ENCODE measurements at regions of chr18 and their contacts with region 1.

Region 1: GRCh38 chr18:23077493-23078256 is 57.6 kb upstream of the CABLES1 start:
- DNase-seq: peak; percentile 77 to 81
- H3K4me3 ChIP-seq: no peak overlapping the region
- H3K4me3 Mint-ChIP-seq: peak overlapping the region; percentile 7
- H3K27ac Mint-ChIP-seq: peak overlapping the region; percentile 50
- H3K4me1 ChIP-seq: peaks cover 9% of the 10 kb centered on the region
- H3K4me1 Mint-ChIP-seq: peaks cover 19% of the 10 kb centered on the region
- H3K27me3 ChIP-seq: no peaks in the 10 kb centered on the region
- H3K27me3 Mint-ChIP-seq: no peaks in the 10 kb centered on the region
- CTCF ChIP-seq: peak; percentile 45 to 70

Region 2: GRCh38 chr18:22591222-22591621 is 486.5 kb before region 1 on chr18:
- CTCF ChIA-PET with region 1: no interaction called
- POLR2A ChIA-PET with region 1: no interaction called
- intact Hi-C with region 1: no loop called
- DNase-seq: no peak
- H3K4me3 ChIP-seq: no peak overlapping the region
- H3K4me3 Mint-ChIP-seq: no peak overlapping the region
- H3K27ac Mint-ChIP-seq: no peak overlapping the region
- H3K4me1 ChIP-seq: no peaks in the 10 kb centered on the region
- H3K4me1 Mint-ChIP-seq: no peaks in the 10 kb centered on the region
- H3K27me3 ChIP-seq: no peaks in the 10 kb centered on the region
- H3K27me3 Mint-ChIP-seq: peaks cover 11% of the 10 kb centered on the region
- CTCF ChIP-seq: no peak

Region 3: DNA sequence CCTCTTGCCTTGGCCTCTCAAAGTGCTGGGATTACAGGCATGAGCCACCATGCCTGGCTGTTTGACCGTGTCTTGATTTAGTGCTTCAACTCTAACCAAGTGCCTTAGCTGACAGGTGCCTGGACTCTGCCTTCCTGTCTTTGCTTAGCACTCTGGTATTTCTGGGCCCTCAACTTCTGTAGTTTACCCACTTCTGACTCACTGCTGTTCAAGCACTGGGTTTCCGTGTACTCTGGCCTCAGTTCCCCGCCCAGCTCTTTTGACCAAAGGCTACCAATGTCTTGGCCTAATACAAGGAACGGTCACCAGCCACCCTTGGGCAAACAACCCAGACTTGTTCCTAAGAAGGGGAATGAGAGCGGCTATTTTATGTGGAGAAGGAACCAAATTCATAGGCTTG is 21.9 kb after region 1 on chr18:
- CTCF ChIA-PET with region 1: interaction called, 6 read pairs
- POLR2A ChIA-PET with region 1: interaction called, 6 read pairs
- intact Hi-C with region 1: loop called (anchors 1 kb)
- DNase-seq: peak; percentile 89 to 94
- H3K4me3 ChIP-seq: no peak overlapping the region
- H3K4me3 Mint-ChIP-seq: peak overlapping the region; percentile 63
- H3K27ac Mint-ChIP-seq: peak overlapping the region; percentile 95
- H3K4me1 ChIP-seq: peaks cover 62% of the 10 kb centered on the region
- H3K4me1 Mint-ChIP-seq: peaks cover 31% of the 10 kb centered on the region
- H3K27me3 ChIP-seq: no peaks in the 10 kb centered on the region
- H3K27me3 Mint-ChIP-seq: no peaks in the 10 kb centered on the region
- CTCF ChIP-seq: no peak

Region 4: DNA sequence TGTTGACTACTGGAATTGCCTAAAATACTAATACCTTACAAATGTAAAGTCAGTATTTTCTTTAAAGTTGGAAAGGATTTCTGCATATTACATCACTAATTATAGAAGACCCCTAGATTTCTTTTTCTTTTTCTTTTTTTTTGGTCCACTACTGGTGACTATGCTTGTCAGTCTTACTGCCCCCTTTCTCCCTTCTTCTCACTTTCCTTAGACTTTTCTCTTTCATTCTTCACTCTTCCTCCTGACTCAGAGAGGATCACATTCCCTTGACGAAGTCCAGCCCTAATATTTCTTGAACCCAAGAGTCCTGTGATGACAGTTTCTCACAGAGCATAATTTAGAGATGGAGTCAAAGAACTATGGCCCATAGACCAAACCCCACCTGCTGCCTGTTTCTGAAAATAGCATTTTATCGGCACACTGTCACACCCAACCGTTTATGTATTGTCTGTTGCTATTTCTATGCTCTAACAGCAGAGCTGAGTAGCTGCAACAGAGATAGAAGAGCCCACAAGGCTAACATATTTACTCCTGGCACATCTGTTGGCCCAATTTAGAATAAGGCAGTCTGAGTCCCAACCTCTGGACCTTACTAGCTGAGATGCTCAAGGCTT is 334.8 kb after region 1 on chr18:
- CTCF ChIA-PET with region 1: no interaction called
- POLR2A ChIA-PET with region 1: no interaction called
- intact Hi-C with region 1: loop called (anchors 1 kb)
- DNase-seq: no peak
- H3K4me3 ChIP-seq: no peak overlapping the region
- H3K4me3 Mint-ChIP-seq: no peak overlapping the region
- H3K27ac Mint-ChIP-seq: no peak overlapping the region
- H3K4me1 ChIP-seq: no peaks in the 10 kb centered on the region
- H3K4me1 Mint-ChIP-seq: no peaks in the 10 kb centered on the region
- H3K27me3 ChIP-seq: no peaks in the 10 kb centered on the region
- H3K27me3 Mint-ChIP-seq: no peaks in the 10 kb centered on the region
- CTCF ChIP-seq: no peak

Measured in Caco-2 (cell line).